Adrenal gland (tissue), 19 donors: ENCODE measurements at regions of chr12 and their contacts with region 1.

Region 1: DNA sequence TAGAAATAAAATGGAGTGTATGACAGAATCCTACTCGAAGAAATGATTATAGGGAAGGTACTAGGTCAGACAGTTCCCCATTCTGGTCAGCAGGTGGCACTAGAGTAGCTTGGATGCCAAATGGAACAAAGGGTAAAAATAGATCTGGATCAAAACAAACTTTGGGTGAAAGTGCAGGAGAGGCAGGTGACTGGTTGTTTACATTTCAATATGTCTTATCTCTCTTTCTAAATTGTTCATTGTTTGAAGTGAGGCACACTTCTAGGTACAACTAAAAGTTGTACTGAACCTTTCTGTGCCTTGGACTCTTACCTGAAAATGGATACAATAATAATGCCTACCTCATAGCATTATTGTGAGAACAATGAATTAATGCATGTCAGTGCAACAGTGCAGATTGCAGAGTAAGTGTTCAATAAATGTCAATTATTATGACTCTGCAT is 62.0 kb upstream of the OSBPL8 start:
- DNase-seq: peak; percentile 64 to 91 (median 77)
- H3K4me3 ChIP-seq: no peak overlapping the region
- H3K27ac ChIP-seq: no peak overlapping the region
- H3K4me1 ChIP-seq: peaks cover 0 to 4% of the 10 kb centered on the region in 2 donors
- H3K27me3 ChIP-seq: no peaks in the 10 kb centered on the region
- CTCF ChIP-seq: peak; percentile 93 to 98 (median 97)
- POLR2A ChIP-seq: no peak

Region 2: DNA sequence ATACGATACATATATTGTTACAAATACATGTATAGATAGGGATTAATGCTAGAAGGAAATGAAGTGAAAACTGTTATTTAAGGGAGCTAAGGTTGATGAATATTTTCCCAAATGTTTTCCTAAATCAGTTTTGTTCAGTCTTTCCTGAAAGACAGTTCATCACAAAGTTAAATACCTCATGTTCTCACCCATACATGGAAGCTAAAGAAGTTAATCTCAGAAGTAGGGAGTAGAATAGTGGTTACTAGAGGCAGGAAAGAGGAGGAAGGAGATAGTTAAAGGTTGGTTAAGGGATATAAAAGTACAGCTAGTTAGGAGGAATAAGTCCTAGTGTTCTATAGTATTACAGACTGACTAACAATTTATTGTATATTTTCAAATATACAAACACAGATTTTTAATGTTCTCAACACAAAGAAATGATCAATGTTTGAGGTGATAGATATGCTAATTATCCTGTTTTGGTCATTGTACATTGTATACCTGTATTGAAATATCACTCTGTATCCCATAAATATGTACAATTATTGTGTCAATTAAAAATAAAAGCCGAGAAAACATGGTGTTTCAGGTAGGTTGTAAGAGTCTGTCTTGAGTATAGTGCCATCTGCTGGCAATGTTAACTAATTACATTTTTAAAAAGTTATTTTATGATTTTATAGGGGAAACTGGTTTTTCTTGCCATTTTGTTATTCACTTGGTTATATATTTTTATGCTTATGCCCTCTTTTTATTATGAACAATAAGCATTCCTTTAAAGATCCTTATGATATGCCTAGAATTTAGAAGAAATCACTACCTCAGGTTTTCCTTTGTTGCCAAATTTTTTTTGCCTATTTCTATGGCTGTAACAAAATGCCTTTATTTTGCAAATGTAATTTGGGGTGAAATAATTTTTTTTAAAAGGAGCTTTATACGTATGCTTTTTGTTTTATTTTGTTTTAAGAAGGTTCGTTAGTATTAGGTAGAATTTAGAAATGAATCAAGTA is 169.3 kb after region 1 on chr12:
- intact Hi-C with region 1: loop called (anchors 5 to 10 kb)
- DNase-seq: no peak
- H3K4me3 ChIP-seq: no peak overlapping the region
- H3K27ac ChIP-seq: no peak overlapping the region
- H3K4me1 ChIP-seq: peaks cover 0 to 37% of the 10 kb centered on the region in 2 donors
- H3K27me3 ChIP-seq: no peaks in the 10 kb centered on the region
- CTCF ChIP-seq: peak; percentile 57 to 90 (median 74)
- POLR2A ChIP-seq: no peak

Region 3: GRCh38 chr12:77001181-77001758 is 379.7 kb after region 1 on chr12:
- intact Hi-C with region 1: loop called (anchors 5 to 10 kb)
- DNase-seq: no peak
- H3K4me3 ChIP-seq: no peak overlapping the region
- H3K27ac ChIP-seq: no peak overlapping the region
- H3K4me1 ChIP-seq: no peaks in the 10 kb centered on the region
- H3K27me3 ChIP-seq: no peaks in the 10 kb centered on the region
- CTCF ChIP-seq: no peak
- POLR2A ChIP-seq: no peak

Region 4: DNA sequence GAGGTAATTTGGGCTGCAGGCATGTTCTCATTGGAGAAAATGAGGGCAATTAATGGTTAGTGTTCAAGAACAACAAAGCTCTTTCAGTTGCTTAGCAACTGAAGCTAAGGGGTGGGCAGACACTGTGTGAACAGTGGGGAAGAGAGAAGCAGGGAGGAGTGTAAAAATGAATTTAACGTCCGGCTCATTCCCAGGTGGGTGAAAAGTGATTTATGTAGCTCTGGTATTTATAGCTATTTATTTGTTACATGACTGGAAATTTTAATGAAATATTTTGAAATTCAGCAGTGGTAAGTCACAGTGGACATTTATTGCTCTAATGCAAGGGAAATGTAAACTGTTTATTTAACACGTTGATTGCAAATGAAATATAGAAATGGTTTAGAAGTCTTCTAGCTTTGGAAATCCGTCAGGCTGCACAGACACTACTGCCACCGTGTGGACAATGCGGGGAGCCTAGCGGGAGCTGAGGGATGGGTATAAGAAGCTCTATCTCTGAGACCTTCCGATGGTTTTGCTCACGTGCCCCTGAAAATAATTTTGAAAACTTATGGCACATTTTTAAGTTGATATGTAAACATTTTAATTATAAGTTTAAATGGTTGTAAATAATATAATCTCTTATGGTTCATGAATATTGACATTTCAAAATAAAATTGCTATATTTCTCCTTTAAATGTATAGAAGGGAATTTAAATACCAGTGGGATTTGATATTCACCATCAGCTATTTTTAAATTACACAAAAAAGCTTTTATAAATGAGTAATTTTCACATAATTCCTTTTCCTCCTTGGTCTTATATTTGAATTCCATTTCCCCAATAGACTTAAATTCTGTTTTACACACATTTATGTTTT is 389.3 kb after region 1 on chr12:
- intact Hi-C with region 1: loop called (anchors 5 to 10 kb)
- DNase-seq: peak; percentile 53 to 86 (median 71)
- H3K4me3 ChIP-seq: no peak overlapping the region
- H3K27ac ChIP-seq: no peak overlapping the region
- H3K4me1 ChIP-seq: no peaks in the 10 kb centered on the region
- H3K27me3 ChIP-seq: no peaks in the 10 kb centered on the region
- CTCF ChIP-seq: peak; percentile 49 to 96 (median 72)
- POLR2A ChIP-seq: no peak